Dendritic cell treated with granulocyte-macrophage colony-stimulating factor and Interleukin-4, amounts not matched to agents 40 ng/mL and 50 ng/mL, for 4 days (primary cell): ENCODE measurements at regions of chr10 and their contacts with region 1.

Region 1: GRCh38 chr10:58531084-58531695 is 18.5 kb downstream of the BICC1 start:
- H3K4me3 Mint-ChIP-seq: no peak overlapping the region
- H3K27ac Mint-ChIP-seq: no peak overlapping the region
- H3K4me1 Mint-ChIP-seq: peaks cover 7% of the 10 kb centered on the region
- H3K27me3 Mint-ChIP-seq: peaks cover 1% of the 10 kb centered on the region

Region 2: GRCh38 chr10:57964351-57964750 is 566.8 kb before region 1 on chr10:
- intact Hi-C with region 1: no loop called
- H3K4me3 Mint-ChIP-seq: no peak overlapping the region
- H3K27ac Mint-ChIP-seq: no peak overlapping the region
- H3K4me1 Mint-ChIP-seq: no peaks in the 10 kb centered on the region
- H3K27me3 Mint-ChIP-seq: no peaks in the 10 kb centered on the region

Region 3: GRCh38 chr10:58590152-58590840 is 59.1 kb after region 1 on chr10:
- intact Hi-C with region 1: loop called (anchors 10 kb)
- H3K4me3 Mint-ChIP-seq: no peak overlapping the region
- H3K27ac Mint-ChIP-seq: peak overlapping the region; percentile 32
- H3K4me1 Mint-ChIP-seq: peaks cover 67% of the 10 kb centered on the region
- H3K27me3 Mint-ChIP-seq: no peaks in the 10 kb centered on the region

Region 4: DNA sequence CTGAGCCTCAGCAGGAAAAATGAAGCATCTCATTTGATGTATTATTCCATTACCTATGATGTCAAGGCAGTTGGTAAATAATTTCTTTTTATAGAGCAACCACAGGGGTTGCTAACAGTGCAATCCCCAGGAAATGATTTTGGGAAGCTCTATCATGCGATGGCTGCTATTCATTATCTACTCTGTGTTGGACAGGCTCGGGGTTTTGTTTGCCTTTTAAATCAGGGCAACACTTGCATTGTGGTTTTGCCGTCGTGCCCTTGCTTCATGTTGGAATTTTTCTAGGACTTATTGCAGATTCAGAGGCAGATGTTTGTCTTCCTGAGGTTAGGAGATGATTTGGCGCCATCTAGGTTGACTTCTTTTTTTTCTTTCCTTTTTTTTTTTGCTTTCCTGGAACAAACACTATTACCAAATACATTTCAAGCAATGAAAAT is 109.9 kb after region 1 on chr10:
- intact Hi-C with region 1: loop called (anchors 1 kb)
- H3K4me3 Mint-ChIP-seq: peak overlapping the region; percentile 49
- H3K27ac Mint-ChIP-seq: no peak overlapping the region
- H3K4me1 Mint-ChIP-seq: peaks cover 11% of the 10 kb centered on the region
- H3K27me3 Mint-ChIP-seq: no peaks in the 10 kb centered on the region

Region 5: GRCh38 chr10:58781873-58782488 is 250.8 kb after region 1 on chr10:
- intact Hi-C with region 1: loop called (anchors 1 kb)
- H3K4me3 Mint-ChIP-seq: no peak overlapping the region
- H3K27ac Mint-ChIP-seq: no peak overlapping the region
- H3K4me1 Mint-ChIP-seq: no peaks in the 10 kb centered on the region
- H3K27me3 Mint-ChIP-seq: no peaks in the 10 kb centered on the region